Activated CD8-positive, alpha-beta T cell treated with anti-CD3 and anti-CD28 coated beads, Interleukin-2, amount 10 ng/mL, durations not matched to agents 7 days and 5 days (primary cell): ENCODE measurements at regions of chr15 and their contacts with region 1.

Region 1: GRCh38 chr15:31215490-31216214 is 111.0 kb upstream of the KLF13 start:
- DNase-seq: peak; percentile 89
- ATAC-seq: peak; percentile 82
- H3K4me3 Mint-ChIP-seq: peak overlapping the region; percentile 71
- H3K27ac Mint-ChIP-seq: peak overlapping the region; percentile 63
- H3K4me1 Mint-ChIP-seq: peaks cover 42% of the 10 kb centered on the region
- H3K27me3 Mint-ChIP-seq: no peaks in the 10 kb centered on the region

Region 2: DNA sequence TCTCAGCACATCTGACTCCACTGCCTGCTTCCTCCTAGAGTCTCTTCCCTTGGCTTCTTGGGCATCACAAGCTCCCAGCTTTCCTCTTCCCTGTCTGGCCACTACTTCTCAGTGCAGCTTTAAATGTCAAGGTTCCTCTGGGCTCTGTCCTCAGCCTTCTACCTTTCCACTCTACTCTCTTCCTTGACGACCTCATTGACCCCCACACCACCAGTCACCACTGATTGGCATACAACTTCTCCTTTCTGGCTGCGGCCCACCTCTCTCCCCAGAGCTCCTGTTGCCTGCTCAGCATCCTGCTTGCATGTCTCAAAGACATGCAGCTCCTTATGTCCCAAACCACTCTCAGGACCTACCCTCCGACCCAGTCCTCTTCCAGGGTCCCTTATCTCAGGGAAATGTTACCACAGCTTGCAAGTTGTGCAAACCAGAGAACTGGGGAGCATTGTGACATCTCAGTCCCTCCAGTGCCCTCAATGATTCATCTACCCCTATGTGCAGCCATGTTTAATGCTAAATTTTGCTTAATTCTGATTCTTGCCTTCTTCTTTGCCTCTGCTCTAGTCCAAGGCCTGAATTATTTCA is 164.1 kb before region 1 on chr15:
- CTCF ChIA-PET with region 1: no interaction called
- POLR2A ChIA-PET with region 1: no interaction called
- DNase-seq: no peak
- ATAC-seq: no peak
- H3K4me3 Mint-ChIP-seq: no peak overlapping the region
- H3K27ac Mint-ChIP-seq: no peak overlapping the region
- H3K4me1 Mint-ChIP-seq: peaks cover 10% of the 10 kb centered on the region
- H3K27me3 Mint-ChIP-seq: peaks cover 2% of the 10 kb centered on the region

Region 3: GRCh38 chr15:31200735-31201151 is 14.9 kb before region 1 on chr15:
- CTCF ChIA-PET with region 1: interaction called, 16 read pairs
- POLR2A ChIA-PET with region 1: no interaction called
- DNase-seq: peak; percentile 80
- ATAC-seq: peak; percentile 86
- H3K4me3 Mint-ChIP-seq: no peak overlapping the region
- H3K27ac Mint-ChIP-seq: peak overlapping the region; percentile 32
- H3K4me1 Mint-ChIP-seq: peaks cover 19% of the 10 kb centered on the region
- H3K27me3 Mint-ChIP-seq: peaks cover 14% of the 10 kb centered on the region

Region 4: DNA sequence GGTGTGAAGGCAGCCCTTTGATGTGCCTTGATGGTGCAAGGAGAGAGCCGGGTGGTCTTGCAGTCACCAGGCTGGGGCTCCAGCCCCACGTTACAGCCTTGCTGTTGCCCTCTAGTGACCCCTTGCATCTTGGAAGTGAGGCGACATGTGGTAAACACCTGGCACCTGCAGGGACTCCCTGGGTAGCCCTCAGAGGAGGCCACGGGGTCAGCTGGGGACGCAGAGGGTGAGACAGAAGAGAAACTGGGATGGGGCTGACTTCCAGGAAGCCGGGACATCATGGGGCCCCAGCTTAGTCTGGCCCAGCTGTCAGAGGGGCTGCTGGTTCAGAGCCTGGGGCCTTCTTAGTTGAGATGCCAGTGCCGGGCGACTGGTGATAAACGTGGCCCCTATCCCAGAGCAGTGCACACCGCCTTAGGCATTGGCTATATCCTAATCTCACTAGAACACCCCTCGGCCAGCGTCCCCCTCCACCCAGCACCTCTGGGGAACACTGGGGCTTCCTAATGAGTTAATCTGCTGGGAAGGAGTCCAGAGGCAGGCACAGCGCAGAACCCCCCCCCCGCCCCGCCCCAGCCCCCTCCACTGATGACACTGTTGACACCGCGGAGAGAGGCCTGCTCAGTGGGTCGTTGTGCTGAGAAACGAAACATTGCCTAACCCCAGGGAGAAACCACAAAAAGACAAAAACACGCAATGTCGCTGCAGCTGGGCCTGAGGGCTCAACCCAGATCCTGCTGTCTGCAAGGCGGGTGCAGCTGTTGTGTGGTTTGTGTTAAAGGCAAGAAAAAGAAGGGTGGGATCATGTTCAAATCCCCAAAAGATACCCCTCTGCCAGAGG is 50.4 kb after region 1 on chr15:
- CTCF ChIA-PET with region 1: interaction called, 19 read pairs
- POLR2A ChIA-PET with region 1: interaction called, 16 read pairs
- DNase-seq: peak; percentile 87
- ATAC-seq: peak; percentile 77
- H3K4me3 Mint-ChIP-seq: peak overlapping the region; percentile 61
- H3K27ac Mint-ChIP-seq: peak overlapping the region; percentile 95
- H3K4me1 Mint-ChIP-seq: peaks cover 95% of the 10 kb centered on the region
- H3K27me3 Mint-ChIP-seq: no peaks in the 10 kb centered on the region

Region 5: DNA sequence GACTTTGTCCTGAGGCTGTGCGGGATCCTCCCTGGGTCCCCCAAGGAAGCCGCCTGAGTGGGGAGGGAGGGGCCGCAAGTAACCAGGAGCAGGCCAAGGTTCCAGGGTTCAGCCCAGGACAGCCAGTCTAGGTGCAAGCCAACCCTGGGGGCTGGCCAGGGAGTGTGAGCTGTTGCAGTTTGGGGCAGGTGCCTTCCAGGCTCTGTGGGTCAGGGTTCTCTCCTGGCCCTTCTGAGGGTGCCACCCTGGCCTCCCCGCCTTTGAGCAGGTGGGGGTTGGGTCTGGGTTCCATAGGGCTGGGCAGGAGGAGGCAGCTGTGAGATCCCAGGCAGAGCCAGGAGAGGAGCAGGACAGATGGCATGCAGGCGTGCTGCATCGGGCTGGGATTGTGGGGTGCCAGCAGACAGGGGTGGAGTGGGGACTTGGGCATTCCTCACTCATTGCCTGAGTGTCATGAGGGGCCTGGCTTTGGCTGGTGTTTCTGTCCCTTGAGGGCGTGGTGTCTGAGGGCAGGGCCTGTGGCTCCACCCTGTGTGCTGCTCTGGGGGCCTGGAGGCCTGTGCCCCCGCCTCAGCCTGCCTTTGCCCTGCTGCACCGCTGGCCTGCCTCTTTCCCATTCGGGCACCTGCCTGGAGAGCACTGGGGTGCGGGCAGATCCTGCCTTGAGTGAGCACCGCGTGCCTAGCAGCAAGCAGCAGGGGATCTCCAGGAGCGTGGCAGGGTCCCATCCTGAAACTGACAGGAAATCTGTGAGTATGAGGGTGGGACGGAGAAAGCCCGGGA is 129.4 kb after region 1 on chr15:
- CTCF ChIA-PET with region 1: interaction called, 15 read pairs
- POLR2A ChIA-PET with region 1: interaction called, 8 read pairs
- DNase-seq: peak; percentile 61
- ATAC-seq: peak; percentile 21
- H3K4me3 Mint-ChIP-seq: peak overlapping the region; percentile 95
- H3K27ac Mint-ChIP-seq: peak overlapping the region; percentile 97
- H3K4me1 Mint-ChIP-seq: peaks cover 98% of the 10 kb centered on the region
- H3K27me3 Mint-ChIP-seq: no peaks in the 10 kb centered on the region